BJ (cell line): ENCODE measurements at regions of chr3 and their contacts with region 1.

Region 1: DNA sequence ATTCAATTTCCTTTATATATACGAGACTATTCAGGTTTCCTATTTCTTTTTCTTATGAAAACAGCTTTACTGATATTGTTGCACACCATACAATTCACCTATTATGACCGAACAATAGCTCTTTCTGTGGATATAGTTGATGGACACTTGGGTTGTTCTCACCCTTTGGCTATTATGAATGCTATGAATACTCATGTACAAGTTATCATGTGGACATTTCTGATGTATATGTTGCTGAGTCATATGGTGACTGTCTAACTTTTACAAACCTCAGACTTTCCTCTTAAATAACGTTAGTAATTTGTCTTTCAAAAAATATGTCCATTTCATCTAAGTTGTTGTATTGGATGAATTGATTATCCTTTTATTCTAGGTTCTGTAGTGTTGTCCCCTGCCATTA is 15.7 kb upstream of the USF3 start:
- DNase-seq: no peak
- H3K4me3 ChIP-seq: no peak overlapping the region
- H3K27me3 ChIP-seq: no peaks in the 10 kb centered on the region
- CTCF ChIP-seq: no peak

Region 2: DNA sequence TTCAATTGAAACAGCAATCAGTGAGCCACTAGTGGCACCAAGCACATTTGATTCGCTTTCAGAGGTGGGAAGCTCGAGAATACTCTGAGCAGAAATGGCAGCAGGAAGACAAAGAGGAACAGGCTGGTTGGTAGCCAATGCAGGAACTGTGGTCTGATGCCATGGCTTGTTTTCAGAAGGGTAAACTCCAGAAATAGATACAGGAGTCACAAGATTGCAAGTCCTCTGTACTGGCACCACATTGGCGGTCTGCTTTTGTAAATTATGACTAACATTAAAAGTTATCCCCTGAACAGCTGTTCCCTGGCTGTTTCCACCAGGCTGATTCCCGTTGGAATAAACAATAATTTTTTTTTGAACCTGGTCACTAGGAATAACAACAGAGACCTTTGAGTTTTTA is 51.2 kb before region 1 on chr3:
- CTCF ChIA-PET with region 1: no interaction called
- POLR2A ChIA-PET with region 1: interaction called, 19 read pairs
- DNase-seq: no peak
- H3K4me3 ChIP-seq: no peak overlapping the region
- H3K27me3 ChIP-seq: no peaks in the 10 kb centered on the region
- CTCF ChIP-seq: no peak

Region 3: GRCh38 chr3:114011059-114011797 is 299.1 kb after region 1 on chr3:
- CTCF ChIA-PET with region 1: no interaction called
- POLR2A ChIA-PET with region 1: no interaction called
- DNase-seq: no peak
- H3K4me3 ChIP-seq: no peak overlapping the region
- H3K27me3 ChIP-seq: no peaks in the 10 kb centered on the region
- CTCF ChIP-seq: no peak

Region 4: DNA sequence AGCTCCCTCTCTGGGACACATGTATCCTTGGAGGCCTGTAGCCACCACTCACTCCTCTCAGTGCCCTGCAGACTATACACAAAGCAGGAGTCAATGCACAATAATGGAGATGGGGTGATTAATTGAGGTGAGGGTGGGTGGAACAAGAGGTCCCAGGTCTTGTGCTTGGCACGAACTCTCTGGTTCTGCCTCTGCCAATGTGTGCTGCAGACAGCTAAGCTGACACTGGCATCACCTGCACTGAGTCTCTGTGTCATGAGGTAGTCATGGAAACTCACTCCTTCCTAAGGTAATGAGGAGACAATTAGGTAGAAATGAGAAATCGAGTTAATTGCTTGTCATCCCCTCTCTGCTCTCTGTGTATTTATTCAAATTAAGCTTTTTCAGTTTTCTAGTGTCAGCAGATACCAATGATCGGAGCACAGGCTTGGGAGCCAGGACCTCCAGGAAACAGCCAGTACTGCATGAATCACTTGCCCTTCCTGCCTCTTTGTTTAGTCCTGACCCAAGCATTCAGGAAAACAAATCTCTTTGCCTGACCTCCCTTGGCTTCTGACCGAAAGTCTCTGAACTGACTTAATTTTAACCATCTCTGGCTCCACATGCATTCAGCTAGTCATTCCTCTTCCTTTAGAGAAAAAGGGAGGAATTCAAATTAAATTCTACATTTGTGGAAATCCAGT is 410.0 kb after region 1 on chr3:
- CTCF ChIA-PET with region 1: no interaction called
- POLR2A ChIA-PET with region 1: no interaction called
- DNase-seq: peak; percentile 5
- H3K4me3 ChIP-seq: no peak overlapping the region
- H3K27me3 ChIP-seq: no peaks in the 10 kb centered on the region
- CTCF ChIP-seq: no peak